ENCODE measurements at regions of chr11 and their contacts with region 1.

Region 1: GRCh38 chr11:114059278-114059983 is at the start of gene ZBTB16:
- DNase-seq: peak; percentile 89 to 95
- ATAC-seq: peak; percentile 85
- H3K4me3 ChIP-seq: peak within 1 kb of the TSS; percentile 84 to 95
- H3K27ac ChIP-seq: peak within 1 kb of the TSS; percentile 90 to 92
- H3K4me1 ChIP-seq: peaks cover 0 to 5% of the 10 kb centered on the region in 2 donors
- H3K27me3 ChIP-seq: no peaks in the 10 kb centered on the region
- total RNA-seq, gene ZBTB16: 54.5 to 283 TPM

Region 2: GRCh38 chr11:114025329-114025907 is 34.0 kb before region 1 on chr11:
- intact Hi-C with region 1: no loop called
- DNase-seq: no peak
- ATAC-seq: no peak
- H3K4me3 ChIP-seq: no peak overlapping the region
- H3K27ac ChIP-seq: no peak overlapping the region
- H3K4me1 ChIP-seq: peaks cover 0 to 6% of the 10 kb centered on the region in 2 donors
- H3K27me3 ChIP-seq: no peaks in the 10 kb centered on the region

Region 3: GRCh38 chr11:114036156-114036811 is 23.1 kb before region 1 on chr11:
- intact Hi-C with region 1: loop called in 1 of 2 experiments (anchors 1 kb)
- DNase-seq: peak; percentile 87 to 93
- ATAC-seq: peak; percentile 92
- H3K4me3 ChIP-seq: no peak overlapping the region
- H3K27ac ChIP-seq: peak overlapping the region; percentile 62 to 70
- H3K4me1 ChIP-seq: no peaks in the 10 kb centered on the region
- H3K27me3 ChIP-seq: no peaks in the 10 kb centered on the region

Region 4: DNA sequence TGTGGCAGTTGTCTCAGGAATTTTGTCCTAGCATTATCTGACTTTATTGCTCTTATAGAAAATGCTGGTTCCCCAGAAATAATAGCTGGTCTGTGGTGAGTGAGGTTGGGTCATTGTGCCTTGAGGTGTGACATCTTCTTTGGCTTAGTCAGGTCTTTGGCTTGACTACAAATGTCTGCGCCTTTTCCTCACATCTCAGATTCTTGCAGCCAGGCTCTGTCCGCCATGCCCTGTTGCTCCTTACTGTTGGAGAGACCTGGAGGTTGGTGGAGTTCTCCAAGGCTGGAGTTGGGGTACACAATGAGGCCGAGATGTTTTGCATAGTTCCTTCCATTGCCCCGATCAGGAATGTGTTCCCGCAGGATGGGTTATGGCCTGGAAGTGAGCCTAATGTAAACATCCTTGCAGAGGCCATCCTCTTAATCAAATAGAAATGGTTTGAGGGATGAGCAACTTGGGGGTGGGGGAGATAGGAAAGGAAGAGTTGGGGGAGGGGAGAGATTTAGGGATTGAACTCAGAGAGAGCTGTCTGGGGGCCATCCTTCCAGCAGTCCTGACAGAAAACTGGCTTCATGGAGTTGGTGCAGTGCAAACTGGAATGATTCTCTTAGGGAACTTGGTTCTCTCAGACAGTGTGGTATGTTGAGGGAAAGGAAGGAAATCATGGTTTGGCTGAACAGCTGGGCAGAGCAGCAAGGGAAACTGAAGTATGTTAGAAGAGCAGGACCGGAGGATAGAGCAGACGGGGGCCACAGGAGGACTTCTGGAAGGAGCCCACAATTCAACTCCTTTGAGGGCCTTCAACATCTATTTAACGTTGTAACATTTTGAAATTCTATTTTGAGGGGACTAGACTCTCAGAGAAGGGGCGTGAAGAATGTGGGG is 50.0 kb after region 1 on chr11:
- intact Hi-C with region 1: loop called (anchors 5 kb)
- DNase-seq: no peak
- ATAC-seq: peak; percentile 16
- H3K4me3 ChIP-seq: no peak overlapping the region
- H3K27ac ChIP-seq: peak overlapping the region; percentile 99 to 100
- H3K4me1 ChIP-seq: peaks cover 12 to 18% of the 10 kb centered on the region in 2 donors
- H3K27me3 ChIP-seq: no peaks in the 10 kb centered on the region

Region 5: DNA sequence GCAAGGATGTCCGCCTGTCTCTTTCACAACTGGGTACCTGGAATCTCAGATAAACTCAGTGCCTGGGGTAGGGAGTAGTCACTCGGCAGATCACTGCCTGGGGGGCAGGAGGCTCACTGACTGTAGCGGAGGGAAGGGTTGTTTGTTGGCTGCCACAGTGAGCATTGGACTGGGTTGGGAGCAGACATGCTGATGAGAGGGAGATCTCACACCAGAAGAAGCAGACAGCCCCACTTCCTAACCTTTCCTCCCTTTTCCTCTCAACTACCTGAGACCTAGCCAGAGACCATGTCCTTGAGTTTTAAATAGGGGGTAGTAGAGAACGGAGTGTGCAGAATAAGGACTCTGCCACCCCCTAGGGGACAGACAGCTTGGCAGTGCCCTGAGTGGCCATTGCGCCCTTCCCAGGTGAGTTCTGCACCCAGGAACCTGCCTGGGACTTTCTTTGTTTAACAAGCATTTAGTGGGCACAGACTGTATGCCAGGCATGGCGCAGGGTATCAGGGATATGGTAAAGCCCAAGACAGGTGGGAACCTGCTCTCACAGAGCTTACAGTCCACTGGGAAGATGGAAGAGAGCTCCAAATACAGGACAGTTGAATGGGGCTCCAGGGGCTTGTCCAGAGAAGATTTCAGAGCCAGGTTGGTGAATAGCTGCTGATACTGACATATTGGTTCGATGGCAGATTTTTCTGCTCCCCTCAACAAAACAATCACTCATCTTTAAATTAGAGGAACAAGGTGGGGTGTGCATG is 121.0 kb after region 1 on chr11:
- intact Hi-C with region 1: loop called in 1 of 2 experiments (anchors 2 kb)
- DNase-seq: peak; percentile 69 to 79
- ATAC-seq: peak; percentile 54
- H3K4me3 ChIP-seq: peak overlapping the region in 1 of 2 donors; percentile 66
- H3K27ac ChIP-seq: peak overlapping the region; percentile 94 to 99
- H3K4me1 ChIP-seq: peaks cover 3 to 5% of the 10 kb centered on the region in 2 donors
- H3K27me3 ChIP-seq: no peaks in the 10 kb centered on the region

Region 6: DNA sequence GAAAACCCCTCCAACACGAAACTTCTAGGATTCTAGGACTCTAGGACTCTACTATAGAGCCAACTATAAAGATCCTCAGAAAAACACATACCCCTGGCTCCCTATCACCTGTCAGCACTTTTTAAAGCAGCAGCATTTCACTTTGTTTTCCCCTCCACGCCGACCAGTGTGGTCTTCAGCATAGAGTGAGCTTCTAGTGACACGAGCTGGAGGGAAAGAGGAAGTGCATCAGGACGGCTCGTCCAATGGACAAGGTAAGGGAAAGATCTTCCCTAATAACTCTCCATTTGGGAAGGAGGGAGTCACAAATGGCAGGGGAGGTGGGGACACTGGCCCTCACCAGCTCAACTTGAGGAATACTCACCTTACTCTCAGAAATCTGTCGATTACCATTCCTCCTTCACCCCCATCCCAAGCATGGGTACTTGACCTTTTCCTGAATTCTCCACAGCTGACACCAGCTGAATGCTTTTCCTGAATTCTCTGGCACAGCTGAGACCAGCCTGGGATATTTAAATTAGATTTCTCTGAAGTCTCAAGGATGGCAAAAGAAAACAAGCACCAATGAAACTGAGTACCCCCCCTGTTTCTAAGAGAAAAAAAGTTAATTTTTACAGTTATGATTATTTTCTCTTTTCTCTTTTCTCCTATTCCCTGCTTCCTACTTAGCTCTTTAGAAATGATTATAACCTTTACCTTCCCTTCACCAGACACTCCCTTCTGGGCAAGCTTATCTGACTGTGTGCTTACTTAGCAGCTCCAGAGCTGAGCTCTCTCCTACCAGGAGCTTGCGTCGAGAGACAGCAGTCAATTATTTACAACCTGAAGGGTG is 203.5 kb after region 1 on chr11:
- intact Hi-C with region 1: loop called (anchors 2 to 5 kb)
- DNase-seq: no peak
- ATAC-seq: peak; percentile 39
- H3K4me3 ChIP-seq: no peak overlapping the region
- H3K27ac ChIP-seq: no peak overlapping the region
- H3K4me1 ChIP-seq: no peaks in the 10 kb centered on the region
- H3K27me3 ChIP-seq: no peaks in the 10 kb centered on the region

Measured in aorta (tissue), 5 donors.